Posterior vena cava (tissue), 2 donors: ENCODE measurements at regions of chr17 and their contacts with region 1.

Region 1: GRCh38 chr17:10857976-10858375 is 20.1 kb upstream of the PIRT start:
- DNase-seq: no peak

Region 2: DNA sequence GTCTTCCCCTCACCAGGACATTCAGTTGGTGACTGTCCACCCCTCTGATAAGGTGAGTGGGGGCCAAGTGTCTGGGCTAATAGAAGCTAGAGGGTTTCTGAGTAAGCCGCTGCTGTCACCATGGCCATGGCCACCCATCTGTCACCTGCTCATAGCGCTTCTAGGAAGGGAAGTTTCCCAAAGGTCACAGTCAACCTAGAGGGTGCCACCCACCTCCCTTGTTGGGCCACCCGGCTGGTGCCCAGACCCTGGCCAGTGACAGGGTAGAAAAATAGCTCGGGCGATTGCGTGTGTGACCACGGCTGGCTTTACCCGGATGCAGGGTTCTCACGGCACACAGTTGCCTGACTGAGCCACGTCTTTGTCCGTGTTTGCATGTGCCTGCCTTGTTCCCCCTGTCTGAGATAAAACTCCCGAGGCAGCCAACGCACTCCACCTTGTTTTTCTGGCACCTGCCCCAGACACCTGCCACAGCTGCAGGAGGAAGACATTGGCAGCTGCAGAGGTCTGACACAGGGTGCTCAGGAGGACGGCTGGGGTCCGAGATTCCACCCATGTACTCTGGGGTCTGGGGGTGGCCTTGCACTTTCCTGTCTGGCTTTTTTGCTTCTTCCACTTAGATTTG is 20.9 kb before region 1 on chr17:
- intact Hi-C with region 1: loop called in 1 of 2 experiments (anchors 1 kb)
- DNase-seq: no peak